Activated B cell treated with CpG ODN at 0.5 μM for 24 hours (primary cell): ENCODE measurements at regions of chr10 and their contacts with region 1.

Region 1: DNA sequence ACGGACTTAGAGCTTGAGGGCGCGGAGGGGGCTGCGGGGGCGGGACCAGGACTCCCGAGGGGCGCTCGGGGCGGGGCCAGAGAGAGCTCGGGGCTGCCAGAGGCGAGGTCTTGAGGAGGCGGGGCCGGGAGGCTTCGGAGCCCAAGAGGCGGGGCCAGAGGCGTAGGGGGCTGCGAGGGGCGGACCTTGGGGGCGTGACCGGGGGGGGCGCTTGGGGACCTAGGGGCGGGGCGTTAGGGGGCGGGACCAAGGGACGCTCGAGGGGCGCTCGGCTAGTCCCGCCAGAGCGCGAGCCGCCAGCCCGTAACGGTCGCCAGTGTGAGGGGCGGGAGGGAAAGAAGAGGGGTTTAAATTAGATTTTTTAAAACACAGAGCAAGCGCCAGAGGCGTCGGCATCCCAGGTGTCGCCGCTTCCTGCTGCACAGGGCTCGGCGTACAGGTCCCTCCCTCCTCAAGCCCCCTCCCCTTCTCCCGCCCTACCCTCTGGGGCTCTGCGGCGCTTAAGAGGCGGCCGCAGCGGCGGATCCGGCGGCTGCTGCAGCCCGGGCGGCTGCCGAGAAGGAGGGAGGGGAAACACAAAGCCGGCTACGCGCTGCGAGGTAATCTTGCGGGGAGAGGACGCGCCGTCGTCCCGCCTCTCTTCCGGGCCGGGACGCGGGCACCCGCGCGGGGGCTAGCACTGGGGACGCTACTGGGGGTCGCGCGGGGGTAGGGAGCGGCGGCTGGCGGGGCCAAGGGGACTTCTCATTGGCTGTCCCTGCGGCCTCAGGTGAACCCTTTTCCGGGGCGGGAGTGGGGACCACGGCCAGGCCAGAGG is at the start of gene ADD3:
- DNase-seq: peak; percentile 94
- ATAC-seq: peak; percentile 85
- H3K4me3 Mint-ChIP-seq: no peak within 1 kb of the TSS
- H3K27ac Mint-ChIP-seq: no peak within 1 kb of the TSS
- H3K4me1 Mint-ChIP-seq: peaks cover 54% of the 10 kb centered on the region
- H3K27me3 Mint-ChIP-seq: no peaks in the 10 kb centered on the region
- CTCF ChIP-seq: no peak
- total RNA-seq, gene ADD3: 85.8 and 95.3 TPM in 2 replicates

Region 2: DNA sequence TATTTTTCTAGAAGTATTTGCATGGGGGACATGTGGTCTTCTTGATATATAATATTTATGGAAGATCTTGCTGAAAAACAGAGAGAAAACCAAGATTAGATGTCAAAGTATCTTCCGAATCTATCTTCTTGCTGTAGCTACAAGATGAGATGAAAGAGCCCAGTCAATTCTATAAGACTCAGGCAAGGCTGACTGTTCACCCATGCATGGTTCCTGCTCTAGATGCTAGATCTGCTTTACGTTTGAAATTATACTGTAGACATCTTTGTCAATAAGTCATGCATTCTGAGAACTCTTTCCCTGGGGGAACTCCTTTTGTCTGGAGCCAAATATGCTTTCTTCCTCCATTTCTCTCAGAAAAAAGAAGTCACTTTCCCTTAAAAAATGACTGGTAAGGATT is 1376.6 kb before region 1 on chr10:
- CTCF ChIA-PET with region 1: no interaction called
- POLR2A ChIA-PET with region 1: no interaction called
- intact Hi-C with region 1: no loop called
- DNase-seq: no peak
- ATAC-seq: peak; percentile 79
- H3K4me3 Mint-ChIP-seq: no peak overlapping the region
- H3K27ac Mint-ChIP-seq: peak overlapping the region; percentile 47
- H3K4me1 Mint-ChIP-seq: peaks cover 30% of the 10 kb centered on the region
- H3K27me3 Mint-ChIP-seq: no peaks in the 10 kb centered on the region
- CTCF ChIP-seq: no peak

Region 3: GRCh38 chr10:108735380-108735779 is 1272.5 kb before region 1 on chr10:
- CTCF ChIA-PET with region 1: no interaction called
- POLR2A ChIA-PET with region 1: no interaction called
- intact Hi-C with region 1: no loop called
- DNase-seq: no peak
- ATAC-seq: no peak
- H3K4me3 Mint-ChIP-seq: no peak overlapping the region
- H3K27ac Mint-ChIP-seq: no peak overlapping the region
- H3K4me1 Mint-ChIP-seq: peaks cover 6% of the 10 kb centered on the region
- H3K27me3 Mint-ChIP-seq: no peaks in the 10 kb centered on the region
- CTCF ChIP-seq: no peak

Region 4: GRCh38 chr10:109914966-109915365 is 92.9 kb before region 1 on chr10:
- CTCF ChIA-PET with region 1: no interaction called
- POLR2A ChIA-PET with region 1: interaction called, 11 read pairs
- intact Hi-C with region 1: loop called (anchors 2 kb)
- DNase-seq: no peak
- ATAC-seq: peak; percentile 53
- H3K4me3 Mint-ChIP-seq: no peak overlapping the region
- H3K27ac Mint-ChIP-seq: peak overlapping the region; percentile 54
- H3K4me1 Mint-ChIP-seq: peaks cover 67% of the 10 kb centered on the region
- H3K27me3 Mint-ChIP-seq: no peaks in the 10 kb centered on the region
- CTCF ChIP-seq: no peak

Region 5: GRCh38 chr10:109929501-109930219 is 78.2 kb before region 1 on chr10:
- CTCF ChIA-PET with region 1: no interaction called
- POLR2A ChIA-PET with region 1: no interaction called
- intact Hi-C with region 1: no loop called
- DNase-seq: no peak
- ATAC-seq: no peak
- H3K4me3 Mint-ChIP-seq: no peak overlapping the region
- H3K27ac Mint-ChIP-seq: no peak overlapping the region
- H3K4me1 Mint-ChIP-seq: no peaks in the 10 kb centered on the region
- H3K27me3 Mint-ChIP-seq: peaks cover 13% of the 10 kb centered on the region
- CTCF ChIP-seq: no peak

Region 6: GRCh38 chr10:109996225-109996624 is 11.7 kb before region 1 on chr10:
- CTCF ChIA-PET with region 1: interaction called, 5 read pairs
- POLR2A ChIA-PET with region 1: interaction called, 16 read pairs
- intact Hi-C with region 1: loop called (anchors 1 kb)
- DNase-seq: no peak
- ATAC-seq: peak; percentile 72
- H3K4me3 Mint-ChIP-seq: peak overlapping the region; percentile 59
- H3K27ac Mint-ChIP-seq: peak overlapping the region; percentile 63
- H3K4me1 Mint-ChIP-seq: peaks cover 47% of the 10 kb centered on the region
- H3K27me3 Mint-ChIP-seq: no peaks in the 10 kb centered on the region
- CTCF ChIP-seq: no peak

Region 7: GRCh38 chr10:110076559-110077318 is 68.8 kb after region 1 on chr10:
- CTCF ChIA-PET with region 1: interaction called, 3 read pairs
- POLR2A ChIA-PET with region 1: interaction called, 71 read pairs
- intact Hi-C with region 1: loop called (anchors 1 kb)
- DNase-seq: no peak
- ATAC-seq: peak; percentile 59
- H3K4me3 Mint-ChIP-seq: peak overlapping the region; percentile 85
- H3K27ac Mint-ChIP-seq: peak overlapping the region; percentile 99
- H3K4me1 Mint-ChIP-seq: peaks cover 84% of the 10 kb centered on the region
- H3K27me3 Mint-ChIP-seq: no peaks in the 10 kb centered on the region
- CTCF ChIP-seq: no peak

Region 8: DNA sequence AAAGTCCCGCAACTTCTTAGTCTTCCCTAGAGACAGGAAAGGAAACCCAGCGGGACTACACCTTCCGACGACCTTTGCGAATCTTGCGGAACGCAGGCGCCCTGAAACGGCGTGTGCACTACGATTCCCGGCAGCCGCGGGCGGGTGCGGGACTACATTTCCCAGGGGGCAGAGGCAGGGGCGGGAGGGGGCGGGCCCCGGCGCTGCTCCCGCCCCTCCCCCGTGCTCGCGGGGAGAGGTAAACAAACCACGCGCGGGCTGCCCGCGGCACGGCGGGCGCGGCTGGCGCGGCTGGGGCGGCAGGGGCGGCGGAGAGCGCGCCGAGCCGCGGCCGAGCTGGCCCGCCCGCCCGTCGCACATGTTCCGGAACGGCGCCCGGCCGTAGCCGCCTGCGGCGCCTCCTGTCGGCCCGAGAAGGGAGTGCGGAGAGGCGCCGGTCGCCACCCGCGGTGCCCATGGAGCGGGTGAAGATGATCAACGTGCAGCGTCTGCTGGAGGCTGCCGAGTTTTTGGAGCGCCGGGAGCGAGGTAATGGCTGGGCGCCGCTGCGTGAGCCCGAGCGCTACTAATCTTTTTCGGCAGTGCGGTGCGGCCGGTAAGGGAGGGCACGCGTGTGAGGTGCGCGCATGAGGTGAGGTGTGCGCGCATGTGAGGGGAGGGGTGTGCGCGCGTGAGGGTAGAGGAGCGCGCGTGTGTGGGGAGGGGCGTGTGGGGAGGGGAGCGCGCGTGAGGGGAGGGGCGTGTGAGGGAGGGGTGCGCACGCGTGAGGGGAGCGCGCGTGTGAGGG is 218.0 kb after region 1 on chr10:
- CTCF ChIA-PET with region 1: no interaction called
- POLR2A ChIA-PET with region 1: interaction called, 10 read pairs
- intact Hi-C with region 1: loop called (anchors 1 kb)
- DNase-seq: peak; percentile 83
- ATAC-seq: peak; percentile 51
- H3K4me3 Mint-ChIP-seq: peak overlapping the region; percentile 97
- H3K27ac Mint-ChIP-seq: peak overlapping the region; percentile 96
- H3K4me1 Mint-ChIP-seq: peaks cover 28% of the 10 kb centered on the region
- H3K27me3 Mint-ChIP-seq: no peaks in the 10 kb centered on the region
- CTCF ChIP-seq: no peak

Region 9: DNA sequence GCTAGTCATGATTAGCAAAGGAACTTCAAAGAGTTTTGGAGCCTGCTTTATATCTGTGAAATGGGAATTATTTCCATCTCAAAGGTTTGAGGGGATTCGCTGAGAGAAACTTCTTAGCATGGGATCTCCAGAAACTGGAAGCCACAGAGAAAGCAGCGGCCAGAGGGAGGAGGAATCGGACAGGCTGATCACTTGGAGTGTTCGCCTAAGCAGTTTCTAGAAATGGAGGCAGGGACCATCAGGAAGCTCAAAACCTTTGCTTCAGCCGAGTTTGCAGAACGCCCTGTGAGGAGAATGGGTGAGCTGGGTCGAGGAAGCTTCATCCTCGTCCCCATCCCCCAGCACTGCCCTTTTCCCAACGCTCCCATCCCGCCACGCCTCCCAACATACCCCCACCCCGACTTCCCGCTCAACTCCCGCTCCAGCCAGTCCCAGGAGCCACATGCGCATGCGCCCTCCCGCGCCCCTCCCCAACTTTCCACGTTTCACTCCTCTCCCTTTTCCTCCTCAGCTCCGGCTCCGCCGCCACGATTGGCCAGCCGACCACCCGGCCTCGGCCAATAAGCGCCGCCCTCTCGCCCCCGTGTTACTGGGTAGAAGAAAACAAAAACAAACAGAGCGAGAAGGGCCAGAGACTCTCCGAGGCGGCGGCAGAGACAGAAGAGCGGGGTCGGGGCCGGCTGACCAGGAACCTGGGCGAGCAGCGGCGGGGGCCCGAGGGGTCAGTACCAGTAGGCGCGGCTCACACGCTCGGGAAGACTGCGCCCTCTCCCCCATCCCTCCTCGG is 863.6 kb after region 1 on chr10 and contains the start of gene PDCD4:
- CTCF ChIA-PET with region 1: no interaction called
- POLR2A ChIA-PET with region 1: no interaction called
- intact Hi-C with region 1: loop called (anchors 5 kb)
- DNase-seq: peak; percentile 87
- ATAC-seq: peak; percentile 71
- H3K4me3 Mint-ChIP-seq: peak within 1 kb of the TSS; percentile 94
- H3K27ac Mint-ChIP-seq: peak within 1 kb of the TSS; percentile 97
- H3K4me1 Mint-ChIP-seq: peaks cover 76% of the 10 kb centered on the region
- H3K27me3 Mint-ChIP-seq: no peaks in the 10 kb centered on the region
- CTCF ChIP-seq: no peak
- total RNA-seq, gene PDCD4: 143 and 145 TPM in 2 replicates